AG04449 (cell line): ENCODE measurements at regions of chr2 and their contacts with region 1.

Region 1: GRCh38 chr2:9142551-9143263 is 63.9 kb upstream of the ASAP2 start:
- DNase-seq: peak; percentile 52
- H3K4me3 ChIP-seq: peak overlapping the region; percentile 35
- CTCF ChIP-seq: peak; percentile 95

Region 2: GRCh38 chr2:8872821-8873432 is 269.8 kb before region 1 on chr2:
- CTCF ChIA-PET with region 1: interaction called, 120 read pairs
- POLR2A ChIA-PET with region 1: no interaction called
- DNase-seq: peak; percentile 23
- H3K4me3 ChIP-seq: no peak overlapping the region
- CTCF ChIP-seq: peak; percentile 39

Region 3: DNA sequence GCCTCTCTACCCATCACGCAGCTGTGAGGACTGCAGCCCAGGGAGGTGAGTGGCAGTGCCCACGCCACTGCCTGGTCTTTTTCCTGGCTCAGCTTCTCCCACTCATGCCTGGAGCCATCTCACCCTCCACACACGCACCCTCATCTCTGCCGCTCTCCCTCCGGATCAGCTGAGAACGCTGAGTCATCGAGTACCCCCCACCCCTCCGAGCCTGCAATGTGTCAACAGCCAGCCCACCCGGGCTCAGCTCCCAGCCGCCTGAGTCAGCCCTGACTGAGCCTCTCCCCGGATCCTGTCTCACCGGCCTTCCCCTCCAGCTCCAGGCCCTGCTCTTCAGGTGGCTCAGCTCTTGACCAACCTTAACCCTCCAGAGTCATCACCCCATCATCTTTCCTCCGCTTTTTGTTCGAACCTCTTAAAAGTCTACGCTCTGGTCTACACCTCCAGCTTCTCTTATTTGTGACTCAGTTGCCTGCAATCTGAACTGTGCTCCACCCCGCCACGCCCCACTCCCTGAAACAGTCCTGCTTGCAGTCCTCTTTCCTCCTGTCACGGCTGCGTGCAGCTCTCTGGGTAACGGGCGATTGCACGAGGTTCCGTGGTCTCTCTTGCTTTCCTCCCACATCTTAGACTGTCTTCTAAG is 30.5 kb before region 1 on chr2:
- CTCF ChIA-PET with region 1: interaction called, 45 read pairs
- POLR2A ChIA-PET with region 1: no interaction called
- DNase-seq: peak; percentile 67
- H3K4me3 ChIP-seq: no peak overlapping the region
- CTCF ChIP-seq: no peak

Region 4: GRCh38 chr2:9205963-9206948 is 63.5 kb after region 1 on chr2 and contains the start of gene ASAP2:
- CTCF ChIA-PET with region 1: interaction called, 12 read pairs
- POLR2A ChIA-PET with region 1: no interaction called
- DNase-seq: no peak
- H3K4me3 ChIP-seq: peak within 1 kb of the TSS; percentile 79
- CTCF ChIP-seq: peak; percentile 91

Region 5: DNA sequence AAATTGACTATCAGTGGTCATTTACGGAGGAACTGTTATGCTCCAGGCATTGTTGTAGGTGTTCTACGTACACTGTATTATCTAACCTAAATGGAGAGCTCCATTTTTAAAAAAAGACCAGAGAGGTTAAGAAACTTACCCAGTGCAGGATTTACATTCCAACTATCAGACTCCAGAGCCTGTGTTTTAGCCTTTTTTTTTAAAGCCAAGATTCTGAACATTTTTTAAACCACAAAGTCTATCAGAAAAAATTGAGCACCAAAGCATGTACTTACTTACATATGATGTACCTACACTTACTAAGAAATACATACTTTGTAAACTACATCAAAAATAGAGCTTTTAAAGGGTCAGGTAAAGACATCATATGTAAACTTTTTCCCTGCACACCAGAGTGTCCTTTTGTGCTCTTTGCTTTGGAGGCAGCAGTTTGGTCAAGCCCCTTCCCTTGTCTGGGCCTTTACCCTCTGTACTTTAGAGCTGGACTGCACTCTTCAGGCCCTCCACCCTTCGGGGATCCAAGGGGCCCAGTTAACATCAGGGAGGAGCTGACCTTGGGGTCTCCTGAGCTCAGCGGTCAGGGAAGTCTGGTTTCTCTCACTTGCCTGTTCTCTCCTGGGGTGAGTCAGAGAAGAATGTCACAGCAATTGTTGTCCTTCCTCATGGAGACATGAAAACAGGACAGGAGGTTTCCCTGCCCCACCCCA is 222.2 kb after region 1 on chr2:
- CTCF ChIA-PET with region 1: interaction called, 118 read pairs
- POLR2A ChIA-PET with region 1: interaction called, 4 read pairs
- DNase-seq: no peak
- H3K4me3 ChIP-seq: no peak overlapping the region
- CTCF ChIP-seq: no peak

Region 6: GRCh38 chr2:9423100-9423921 is 280.6 kb after region 1 on chr2 and contains the starts of genes CPSF3 and ITGB1BP1:
- CTCF ChIA-PET with region 1: interaction called, 14 read pairs
- POLR2A ChIA-PET with region 1: no interaction called
- DNase-seq: peak; percentile 71
- H3K4me3 ChIP-seq: peak within 1 kb of the TSS; percentile 98
- CTCF ChIP-seq: no peak